Ascending aorta (tissue), 2 donors: ENCODE measurements at regions of chr3 and their contacts with region 1.

Region 1: GRCh38 chr3:113838631-113839209 is at the start of gene GRAMD1C:
- DNase-seq: peak; percentile 32 to 92
- H3K4me3 ChIP-seq: peak within 1 kb of the TSS; percentile 65 to 71
- H3K27ac ChIP-seq: peak within 1 kb of the TSS; percentile 45 to 70
- H3K4me1 ChIP-seq: peaks cover 0 to 3% of the 10 kb centered on the region in 2 donors
- H3K27me3 ChIP-seq: no peaks in the 10 kb centered on the region
- CTCF ChIP-seq: peak; percentile 75 to 83 (median 80)
- total RNA-seq, gene GRAMD1C: 0.21 TPM

Region 2: DNA sequence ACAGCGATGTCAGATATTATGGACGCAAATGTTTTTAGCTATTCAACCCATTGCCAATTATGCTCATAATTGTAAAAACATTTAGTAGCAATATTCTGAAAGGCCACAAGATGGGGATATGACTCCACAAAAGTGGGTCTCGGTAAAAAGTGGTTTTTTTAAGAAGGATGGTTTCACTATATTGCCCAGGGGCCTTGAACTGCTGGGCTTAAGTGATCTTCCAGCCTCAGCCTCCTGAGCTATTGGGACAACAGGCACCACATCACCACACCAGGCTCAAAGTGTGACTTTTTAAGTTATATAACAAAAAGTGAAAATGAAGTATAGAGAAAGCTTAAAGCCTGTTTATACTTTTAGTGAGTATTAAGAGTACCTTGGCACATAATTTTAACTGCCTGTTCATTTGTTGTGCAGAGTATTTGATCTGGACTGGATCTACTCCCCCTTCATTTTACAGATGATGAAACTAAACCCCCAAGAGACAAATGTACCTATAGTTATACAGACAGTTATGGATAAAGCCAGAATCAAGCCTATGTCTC is 102.1 kb before region 1 on chr3:
- intact Hi-C with region 1: loop called (anchors 5 kb)
- DNase-seq: no peak
- H3K4me3 ChIP-seq: no peak overlapping the region
- H3K27ac ChIP-seq: no peak overlapping the region
- H3K4me1 ChIP-seq: peaks cover 0 to 5% of the 10 kb centered on the region in 2 donors
- H3K27me3 ChIP-seq: no peaks in the 10 kb centered on the region
- CTCF ChIP-seq: peak; percentile 56 to 70 (median 69)

Region 3: GRCh38 chr3:113912552-113913236 is 74.0 kb after region 1 on chr3:
- intact Hi-C with region 1: loop called (anchors 1 kb)
- DNase-seq: no peak
- H3K4me3 ChIP-seq: no peak overlapping the region
- H3K27ac ChIP-seq: no peak overlapping the region
- H3K4me1 ChIP-seq: no peaks in the 10 kb centered on the region
- H3K27me3 ChIP-seq: no peaks in the 10 kb centered on the region
- CTCF ChIP-seq: peak in 2 of 3 experiments; percentile 14 to 24

Region 4: DNA sequence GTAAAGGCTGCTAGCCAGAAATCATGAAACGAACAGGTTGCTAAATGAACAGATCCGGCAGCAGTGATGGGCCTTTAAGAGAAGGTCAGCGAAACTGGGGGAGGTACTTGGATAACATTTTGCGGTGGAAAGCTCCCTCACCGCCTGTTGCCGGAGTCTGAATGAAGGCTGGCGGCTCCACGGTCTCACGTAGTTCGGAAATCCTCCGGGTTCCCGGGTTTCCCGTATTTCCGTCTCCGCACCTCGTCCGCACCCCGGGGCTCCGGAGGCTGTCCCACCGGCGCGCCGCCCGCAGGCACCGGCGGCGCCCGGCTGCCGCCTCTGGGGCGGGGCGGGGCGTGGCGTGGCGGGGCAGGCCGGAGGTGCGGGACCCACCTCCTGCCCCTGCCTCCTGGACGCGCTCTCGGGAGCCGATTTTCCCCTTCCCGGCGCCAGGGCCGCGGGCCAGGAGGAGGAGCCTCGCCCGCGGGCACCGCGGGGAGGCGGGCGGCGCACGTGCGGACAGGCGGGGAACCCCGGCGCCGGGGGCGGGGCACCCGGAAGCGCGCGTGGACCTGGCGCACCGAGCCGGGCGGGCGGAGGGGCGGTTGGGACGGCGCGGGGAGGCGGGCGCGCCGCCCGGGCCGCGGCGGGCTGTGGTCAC is 108.8 kb after region 1 on chr3 and contains the start of gene ZDHHC23:
- intact Hi-C with region 1: loop called (anchors 2 kb)
- DNase-seq: peak in 1 of 2 donors; percentile 85
- H3K4me3 ChIP-seq: peak within 1 kb of the TSS; percentile 70 to 82
- H3K27ac ChIP-seq: peak within 1 kb of the TSS; percentile 60 to 68
- H3K4me1 ChIP-seq: no peaks in the 10 kb centered on the region
- H3K27me3 ChIP-seq: no peaks in the 10 kb centered on the region
- CTCF ChIP-seq: no peak
- total RNA-seq, gene ZDHHC23: 4.4 TPM

Region 5: DNA sequence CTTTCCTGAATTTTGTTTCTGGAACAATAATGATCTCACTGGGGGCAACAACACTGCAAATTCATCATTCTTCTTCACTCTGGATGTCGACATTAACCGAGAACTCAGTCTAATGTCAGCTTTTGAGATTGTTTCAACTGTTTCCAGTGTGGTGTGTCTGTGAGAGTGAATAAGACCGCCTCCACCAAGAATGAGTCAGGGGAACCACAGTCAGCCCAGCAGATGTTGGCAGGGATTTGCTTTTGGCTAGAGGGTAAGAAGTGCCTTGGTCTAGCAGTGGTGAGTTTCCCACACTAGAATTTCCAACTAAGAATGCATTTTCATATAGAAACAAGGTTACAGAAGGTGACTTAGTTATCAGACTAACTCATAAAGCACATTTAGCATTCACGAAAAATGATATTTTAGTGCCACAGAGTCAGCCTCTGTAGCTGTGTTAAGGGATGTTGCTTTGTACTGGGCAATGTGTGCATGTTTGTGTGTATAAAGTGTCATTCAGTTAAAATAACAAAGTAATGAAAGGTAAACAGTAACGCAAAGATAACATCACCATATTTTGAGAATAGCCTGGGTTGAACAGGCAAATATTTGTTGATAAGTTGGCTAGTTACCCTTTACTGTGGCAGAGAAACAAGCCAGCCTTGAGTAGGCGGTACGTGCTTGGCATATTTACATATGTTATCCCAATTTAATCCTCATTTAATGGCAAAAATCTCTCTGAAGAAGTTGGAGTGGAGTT is 306.4 kb after region 1 on chr3:
- intact Hi-C with region 1: loop called (anchors 10 kb)
- DNase-seq: peak in 1 of 2 donors; percentile 78
- H3K4me3 ChIP-seq: no peak overlapping the region
- H3K27ac ChIP-seq: peak overlapping the region; percentile 58 to 65
- H3K4me1 ChIP-seq: peaks cover 6 to 15% of the 10 kb centered on the region in 2 donors
- H3K27me3 ChIP-seq: no peaks in the 10 kb centered on the region
- CTCF ChIP-seq: no peak

Region 6: GRCh38 chr3:115814778-115815380 is 1976.2 kb after region 1 on chr3:
- intact Hi-C with region 1: loop called (anchors 5 kb)
- DNase-seq: peak in 1 of 2 donors; percentile 86
- H3K4me3 ChIP-seq: no peak overlapping the region
- H3K27ac ChIP-seq: no peak overlapping the region
- H3K4me1 ChIP-seq: no peaks in the 10 kb centered on the region
- H3K27me3 ChIP-seq: no peaks in the 10 kb centered on the region
- CTCF ChIP-seq: peak; percentile 63 to 92 (median 89)